Transverse colon (tissue), 4 donors: ENCODE measurements at regions of chr6 and their contacts with region 1.

Region 1: GRCh38 chr6:120916844-120917243 is 417.4 kb downstream of the TBC1D32 start:
- DNase-seq: no peak
- H3K4me3 ChIP-seq: no peak overlapping the region
- H3K27ac ChIP-seq: no peak overlapping the region
- H3K4me1 ChIP-seq: no peaks in the 10 kb centered on the region
- H3K27me3 ChIP-seq: no peaks in the 10 kb centered on the region
- CTCF ChIP-seq: no peak
- EP300 ChIP-seq: no peak
- POLR2A ChIP-seq: no peak

Region 2: GRCh38 chr6:120938876-120939472 is 22.1 kb after region 1 on chr6:
- in situ Hi-C with region 1: no loop called
- intact Hi-C with region 1: loop called (anchors 1 kb)
- DNase-seq: no peak
- H3K4me3 ChIP-seq: no peak overlapping the region
- H3K27ac ChIP-seq: no peak overlapping the region
- H3K4me1 ChIP-seq: no peaks in the 10 kb centered on the region
- H3K27me3 ChIP-seq: no peaks in the 10 kb centered on the region
- CTCF ChIP-seq: no peak
- EP300 ChIP-seq: no peak
- POLR2A ChIP-seq: no peak